Panc1 (cell line): ENCODE measurements at regions of chr6 and their contacts with region 1.

Region 1: GRCh38 chr6:160930547-160931377 is 60.8 kb upstream of the MAP3K4 start:
- DNase-seq: peak; percentile 42
- ATAC-seq: peak; percentile 96
- H3K4me3 ChIP-seq: peak overlapping the region; percentile 46 to 70
- H3K27ac ChIP-seq: no peak overlapping the region; the same call in 1 of the 2 replicates
- H3K4me1 ChIP-seq: peaks cover 4% of the 10 kb centered on the region; the same call in 1 of the 2 replicates
- H3K27me3 ChIP-seq: no peaks in the 10 kb centered on the region
- CTCF ChIP-seq: peak; percentile 92

Region 2: DNA sequence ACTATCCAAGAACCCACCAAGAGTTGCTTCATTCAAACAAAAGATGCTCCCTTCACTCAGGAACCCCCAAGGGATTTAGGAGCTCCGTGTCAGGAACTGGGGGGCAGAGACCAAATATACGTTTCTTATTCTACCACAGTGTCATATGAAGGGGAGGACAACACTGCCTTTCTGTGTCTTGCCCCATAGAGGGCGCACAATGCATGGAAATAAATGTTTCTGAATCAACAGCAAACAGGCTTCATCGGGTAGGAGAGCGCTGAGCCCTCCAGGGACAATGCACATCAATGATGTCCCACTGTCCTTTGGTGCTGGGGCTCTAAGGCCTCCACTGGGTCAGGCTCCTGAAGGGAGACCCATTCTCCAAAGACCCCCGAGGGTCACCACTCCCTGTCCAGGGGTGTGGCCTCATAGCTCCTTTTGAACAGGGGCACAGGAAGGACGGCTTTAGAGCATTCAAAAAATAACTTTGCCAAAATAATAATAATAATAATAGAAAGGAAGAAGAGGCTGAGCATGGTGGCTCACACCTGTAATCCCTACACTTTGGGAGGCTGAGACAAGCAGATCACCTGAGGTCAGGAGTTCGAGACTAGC is 197.6 kb before region 1 on chr6:
- CTCF ChIA-PET with region 1: no interaction called
- POLR2A ChIA-PET with region 1: no interaction called
- in situ Hi-C with region 1: no loop called
- intact Hi-C with region 1: loop called (anchors 2 kb)
- DNase-seq: peak; percentile 22
- ATAC-seq: peak; percentile 98
- H3K4me3 ChIP-seq: no peak overlapping the region
- H3K27ac ChIP-seq: no peak overlapping the region
- H3K4me1 ChIP-seq: no peaks in the 10 kb centered on the region
- H3K27me3 ChIP-seq: no peaks in the 10 kb centered on the region
- CTCF ChIP-seq: peak; percentile 85

Region 3: DNA sequence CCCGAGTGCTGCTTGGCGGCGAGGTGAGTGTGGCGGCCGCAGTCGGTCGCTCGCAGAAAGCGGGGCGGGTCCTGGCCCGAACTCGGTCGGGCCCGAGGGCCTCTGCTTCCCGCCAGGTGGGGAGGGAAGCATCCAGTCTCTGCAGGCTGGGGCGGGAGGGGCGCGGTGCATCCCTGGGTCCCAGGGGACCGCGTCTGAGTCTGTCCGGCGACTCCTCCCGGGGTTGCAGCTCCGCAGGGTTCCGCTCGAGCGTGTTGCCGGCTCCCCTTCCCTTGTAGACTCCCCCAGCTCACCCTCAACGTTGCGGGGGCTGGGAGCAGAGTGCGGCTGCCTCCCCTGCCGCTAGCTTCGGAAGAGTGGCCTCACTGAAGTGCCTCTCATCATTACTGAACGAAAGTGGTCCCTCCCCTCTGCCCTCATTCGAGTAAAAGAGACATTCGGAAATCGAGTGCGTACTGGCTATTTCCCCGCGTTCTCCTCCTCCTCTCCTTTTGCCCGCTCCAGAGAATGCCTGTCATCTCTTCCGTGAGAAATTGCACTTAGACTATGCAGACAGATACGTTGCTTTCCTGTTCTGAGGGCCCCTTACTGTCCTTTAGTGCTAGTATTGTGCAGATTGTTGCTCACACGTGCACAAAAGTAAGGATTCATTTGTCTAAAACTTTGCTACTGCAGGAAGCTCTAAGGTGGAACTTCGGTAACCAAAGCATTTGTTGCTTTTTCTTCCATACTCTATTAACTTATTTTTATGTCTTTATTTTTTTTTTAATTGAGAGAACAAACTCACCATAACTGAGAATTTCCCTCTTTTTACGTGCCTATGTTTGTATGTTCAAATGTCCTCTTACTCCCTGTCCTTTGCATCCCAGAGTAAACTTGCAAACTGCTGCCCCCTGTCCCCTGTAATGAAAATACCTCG is 61.6 kb after region 1 on chr6:
- CTCF ChIA-PET with region 1: interaction called, 8 read pairs
- POLR2A ChIA-PET with region 1: no interaction called
- in situ Hi-C with region 1: no loop called
- intact Hi-C with region 1: loop called (anchors 2 kb)
- DNase-seq: peak; percentile 58
- ATAC-seq: peak; percentile 69
- H3K4me3 ChIP-seq: peak overlapping the region; percentile 67 to 94
- H3K27ac ChIP-seq: peak overlapping the region; percentile 80
- H3K4me1 ChIP-seq: peaks cover 18% of the 10 kb centered on the region
- H3K27me3 ChIP-seq: no peaks in the 10 kb centered on the region
- CTCF ChIP-seq: peak; percentile 78

Region 4: GRCh38 chr6:161029195-161029809 is 98.5 kb after region 1 on chr6:
- CTCF ChIA-PET with region 1: no interaction called
- POLR2A ChIA-PET with region 1: no interaction called
- in situ Hi-C with region 1: no loop called
- intact Hi-C with region 1: no loop called
- DNase-seq: no peak
- ATAC-seq: no peak
- H3K4me3 ChIP-seq: no peak overlapping the region
- H3K27ac ChIP-seq: no peak overlapping the region
- H3K4me1 ChIP-seq: no peaks in the 10 kb centered on the region
- H3K27me3 ChIP-seq: no peaks in the 10 kb centered on the region
- CTCF ChIP-seq: no peak

Region 5: GRCh38 chr6:161091972-161092701 is 161.4 kb after region 1 on chr6:
- CTCF ChIA-PET with region 1: no interaction called
- POLR2A ChIA-PET with region 1: no interaction called
- in situ Hi-C with region 1: no loop called
- intact Hi-C with region 1: loop called (anchors 10 kb)
- DNase-seq: no peak
- ATAC-seq: no peak
- H3K4me3 ChIP-seq: no peak overlapping the region
- H3K27ac ChIP-seq: no peak overlapping the region
- H3K4me1 ChIP-seq: no peaks in the 10 kb centered on the region
- H3K27me3 ChIP-seq: no peaks in the 10 kb centered on the region
- CTCF ChIP-seq: no peak